ENCODE measurements at regions of chr10 and their contacts with region 1.

Region 1: DNA sequence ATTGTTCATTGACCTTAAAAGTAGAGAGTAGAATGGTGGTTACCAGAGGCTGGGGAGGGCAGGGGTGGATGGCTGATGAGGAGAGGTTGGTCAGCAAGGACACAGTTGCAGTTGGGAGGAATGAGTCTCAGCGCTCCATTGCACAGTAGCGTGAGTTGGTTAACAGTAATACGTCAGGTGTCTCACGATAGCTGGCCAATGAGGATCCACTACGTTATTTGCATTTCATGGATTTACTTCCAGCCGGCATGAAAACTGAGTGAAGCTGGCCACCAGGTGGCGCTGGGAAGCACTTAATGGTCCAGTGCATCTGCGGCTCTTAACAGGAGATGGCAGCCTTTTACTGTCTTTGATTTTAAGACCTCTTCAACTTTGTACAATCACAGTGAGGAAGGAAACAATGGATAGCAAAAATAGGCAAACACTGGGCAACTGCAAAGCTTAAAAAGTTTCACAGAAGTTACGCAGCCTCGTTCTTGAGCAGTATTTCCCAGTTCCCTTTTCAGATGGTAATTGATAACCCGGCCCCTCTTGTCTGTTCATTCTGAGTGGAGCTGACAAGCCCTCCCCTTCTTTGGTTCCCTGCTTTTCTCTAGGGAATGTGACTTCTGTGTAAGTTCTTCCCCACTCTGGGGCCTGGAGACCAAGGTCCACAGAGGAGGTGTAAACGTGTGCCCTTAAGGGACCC is 23.7 kb downstream of the AKR1E2 start:
- DNase-seq: peak; percentile 93
- H3K4me3 Mint-ChIP-seq: no peak overlapping the region
- H3K27ac Mint-ChIP-seq: no peak overlapping the region
- H3K4me1 Mint-ChIP-seq: peaks cover 3% of the 10 kb centered on the region
- H3K27me3 Mint-ChIP-seq: no peaks in the 10 kb centered on the region

Region 2: GRCh38 chr10:4839401-4839800 is 10.3 kb before region 1 on chr10:
- CTCF ChIA-PET with region 1: interaction called, 52 read pairs
- POLR2A ChIA-PET with region 1: interaction called, 3 read pairs
- intact Hi-C with region 1: no loop called
- DNase-seq: no peak
- H3K4me3 Mint-ChIP-seq: no peak overlapping the region
- H3K27ac Mint-ChIP-seq: no peak overlapping the region
- H3K4me1 Mint-ChIP-seq: peaks cover 25% of the 10 kb centered on the region
- H3K27me3 Mint-ChIP-seq: no peaks in the 10 kb centered on the region

Region 3: DNA sequence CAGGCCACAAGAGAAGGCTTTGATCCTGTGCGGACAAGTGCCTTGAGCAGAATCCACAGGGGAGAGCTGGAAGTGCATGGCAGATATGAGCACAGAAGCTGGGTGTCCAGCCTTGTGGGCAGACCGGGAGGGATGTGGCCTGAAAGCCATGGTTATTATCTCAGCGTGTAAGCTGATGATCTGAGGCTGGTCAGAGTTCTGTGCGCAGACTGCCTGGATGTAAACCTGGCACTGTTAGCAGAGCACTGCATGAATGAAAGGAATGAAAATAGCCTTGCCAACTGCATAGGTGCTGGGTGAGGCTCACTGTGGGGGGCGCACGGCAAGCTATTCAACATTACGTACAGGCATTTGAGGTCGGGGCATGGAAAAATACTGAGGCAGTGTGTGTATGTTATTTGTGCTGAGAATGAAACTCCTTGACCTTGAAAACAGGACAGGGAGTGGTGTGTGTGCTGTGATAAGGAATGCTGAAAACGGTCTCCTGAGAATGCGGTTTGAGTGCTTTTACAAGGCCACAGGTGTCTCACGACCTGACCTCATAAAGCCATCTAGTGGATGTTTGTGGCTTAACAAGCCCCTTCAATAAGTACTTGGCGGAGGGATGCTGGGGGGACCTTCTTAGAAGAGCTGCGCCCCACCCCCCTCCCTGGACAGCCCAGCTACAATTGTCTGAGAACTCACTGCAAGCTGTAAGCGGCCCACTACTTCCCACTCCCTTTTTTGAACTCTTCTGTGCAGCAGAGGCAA is 132.2 kb after region 1 on chr10:
- CTCF ChIA-PET with region 1: interaction called, 55 read pairs
- POLR2A ChIA-PET with region 1: no interaction called
- intact Hi-C with region 1: loop called (anchors 1 kb)
- DNase-seq: no peak
- H3K4me3 Mint-ChIP-seq: no peak overlapping the region
- H3K27ac Mint-ChIP-seq: no peak overlapping the region
- H3K4me1 Mint-ChIP-seq: no peaks in the 10 kb centered on the region
- H3K27me3 Mint-ChIP-seq: peaks cover 5% of the 10 kb centered on the region

Region 4: DNA sequence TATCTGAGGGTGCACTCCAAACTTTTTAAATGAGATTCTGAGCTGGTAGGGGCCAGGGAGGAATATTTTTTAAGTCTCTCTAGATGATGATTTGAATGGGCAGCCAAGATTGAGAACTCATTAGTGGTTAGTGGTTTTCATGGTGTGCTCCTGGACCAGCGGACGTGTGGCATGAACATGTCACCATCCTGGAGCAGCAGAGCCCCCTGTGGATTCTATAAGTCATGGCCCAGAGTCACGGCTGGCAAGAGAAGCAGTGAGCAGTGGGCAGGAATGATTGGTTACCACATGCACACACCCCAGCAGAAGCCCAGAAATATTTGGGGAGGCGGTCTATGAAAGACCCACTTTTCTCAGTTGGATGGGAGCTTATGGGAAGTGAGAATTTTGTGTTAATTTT is 493.9 kb after region 1 on chr10:
- CTCF ChIA-PET with region 1: interaction called, 11 read pairs
- POLR2A ChIA-PET with region 1: no interaction called
- intact Hi-C with region 1: no loop called
- DNase-seq: peak; percentile 39
- H3K4me3 Mint-ChIP-seq: no peak overlapping the region
- H3K27ac Mint-ChIP-seq: no peak overlapping the region
- H3K4me1 Mint-ChIP-seq: peaks cover 5% of the 10 kb centered on the region
- H3K27me3 Mint-ChIP-seq: no peaks in the 10 kb centered on the region

Region 5: GRCh38 chr10:5434017-5434753 is 584.5 kb after region 1 on chr10:
- CTCF ChIA-PET with region 1: interaction called, 65 read pairs
- POLR2A ChIA-PET with region 1: no interaction called
- intact Hi-C with region 1: loop called (anchors 1 kb)
- DNase-seq: no peak
- H3K4me3 Mint-ChIP-seq: no peak overlapping the region
- H3K27ac Mint-ChIP-seq: no peak overlapping the region
- H3K4me1 Mint-ChIP-seq: peaks cover 17% of the 10 kb centered on the region
- H3K27me3 Mint-ChIP-seq: no peaks in the 10 kb centered on the region